Mammary epithelial cell (primary cell): ENCODE measurements at regions of chrX and their contacts with region 1.

Region 1: DNA sequence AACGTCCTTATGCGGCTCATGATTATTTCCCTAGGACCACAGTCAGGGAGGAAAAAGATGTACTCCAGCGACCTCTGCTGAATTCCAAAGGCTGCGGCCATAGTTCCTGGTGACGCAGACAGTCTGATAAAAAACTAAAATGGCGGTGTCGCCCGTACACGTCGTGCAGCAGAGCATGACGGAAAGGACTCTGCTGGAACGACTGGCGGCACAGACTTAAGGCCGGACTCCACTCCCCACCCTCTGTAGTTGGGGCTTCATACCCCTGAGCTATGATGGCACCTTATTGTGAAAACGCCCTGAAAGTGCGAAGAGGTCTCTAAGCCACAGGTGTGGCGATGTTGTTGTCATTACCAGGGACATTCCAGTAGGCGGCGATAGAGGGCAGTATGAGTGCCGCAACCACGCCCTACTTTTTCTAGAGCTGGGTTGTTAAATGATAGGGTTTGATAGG is 90.0 kb upstream of the EDA2R start:
- DNase-seq: peak; percentile 55
- H3K4me3 ChIP-seq: peak overlapping the region; percentile 27 to 66 (median 52)
- H3K27ac ChIP-seq: no peak overlapping the region
- H3K4me1 ChIP-seq: no peaks in the 10 kb centered on the region
- H3K27me3 ChIP-seq: no peaks in the 10 kb centered on the region
- CTCF ChIP-seq: peak; percentile 44 to 62

Region 2: DNA sequence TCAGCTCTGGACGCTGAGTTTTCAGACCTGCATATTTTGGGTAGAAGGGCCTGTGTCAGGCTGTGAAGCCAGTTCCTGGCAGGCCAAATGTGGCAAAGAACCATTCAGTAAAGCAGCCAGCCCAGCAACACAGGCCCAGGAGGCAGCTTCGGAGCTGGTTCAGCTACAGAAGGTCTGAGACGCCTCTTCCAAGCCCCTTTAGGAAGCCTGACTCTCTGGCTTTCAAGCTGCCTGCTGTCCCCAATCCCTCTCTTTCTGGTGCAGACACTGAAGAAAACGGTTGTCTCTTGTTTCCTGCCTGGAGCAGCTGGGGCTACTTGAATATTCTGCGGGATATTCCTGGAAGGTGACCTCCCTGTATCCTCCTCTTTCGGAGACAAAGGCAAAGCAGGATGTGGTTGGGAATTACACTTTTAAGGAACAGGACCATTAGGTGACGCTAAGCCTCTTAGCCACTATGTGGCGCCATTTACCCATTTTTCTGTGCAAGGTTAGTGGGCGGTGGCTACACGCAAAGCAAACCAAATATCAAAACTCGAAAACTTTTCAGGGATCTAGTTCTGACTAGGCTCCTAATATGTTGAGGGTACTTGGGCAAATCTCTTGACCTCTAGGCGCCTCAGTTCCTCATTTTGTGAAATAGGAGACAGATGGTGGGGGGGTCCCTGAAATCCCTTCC is 1147.0 kb before region 1 on chrX:
- CTCF ChIA-PET with region 1: interaction called, 10 read pairs
- dilution Hi-C with region 1: no loop called
- in situ Hi-C with region 1: loop called in 1 of 2 experiments (anchors 25 kb)
- intact Hi-C with region 1: loop called (anchors 1 kb)
- DNase-seq: peak; percentile 49
- H3K4me3 ChIP-seq: no peak overlapping the region
- H3K27ac ChIP-seq: no peak overlapping the region
- H3K4me1 ChIP-seq: no peaks in the 10 kb centered on the region
- H3K27me3 ChIP-seq: no peaks in the 10 kb centered on the region
- CTCF ChIP-seq: peak; percentile 72 to 75

Region 3: GRCh38 chrX:65745992-65746391 is 982.9 kb before region 1 on chrX:
- CTCF ChIA-PET with region 1: no interaction called
- dilution Hi-C with region 1: no loop called
- in situ Hi-C with region 1: no loop called
- intact Hi-C with region 1: loop called (anchors 5 kb)
- DNase-seq: no peak
- H3K4me3 ChIP-seq: no peak overlapping the region
- H3K27ac ChIP-seq: no peak overlapping the region
- H3K4me1 ChIP-seq: peaks cover 11% of the 10 kb centered on the region
- H3K27me3 ChIP-seq: no peaks in the 10 kb centered on the region
- CTCF ChIP-seq: peak; percentile 25 to 37

Region 4: GRCh38 chrX:65985922-65986588 is 742.8 kb before region 1 on chrX:
- CTCF ChIA-PET with region 1: interaction called, 4 read pairs
- dilution Hi-C with region 1: no loop called
- in situ Hi-C with region 1: no loop called
- intact Hi-C with region 1: loop called (anchors 5 kb)
- DNase-seq: peak; percentile 59
- H3K4me3 ChIP-seq: no peak overlapping the region
- H3K27ac ChIP-seq: no peak overlapping the region
- H3K4me1 ChIP-seq: no peaks in the 10 kb centered on the region
- H3K27me3 ChIP-seq: no peaks in the 10 kb centered on the region
- CTCF ChIP-seq: peak; percentile 33 to 57

Region 5: DNA sequence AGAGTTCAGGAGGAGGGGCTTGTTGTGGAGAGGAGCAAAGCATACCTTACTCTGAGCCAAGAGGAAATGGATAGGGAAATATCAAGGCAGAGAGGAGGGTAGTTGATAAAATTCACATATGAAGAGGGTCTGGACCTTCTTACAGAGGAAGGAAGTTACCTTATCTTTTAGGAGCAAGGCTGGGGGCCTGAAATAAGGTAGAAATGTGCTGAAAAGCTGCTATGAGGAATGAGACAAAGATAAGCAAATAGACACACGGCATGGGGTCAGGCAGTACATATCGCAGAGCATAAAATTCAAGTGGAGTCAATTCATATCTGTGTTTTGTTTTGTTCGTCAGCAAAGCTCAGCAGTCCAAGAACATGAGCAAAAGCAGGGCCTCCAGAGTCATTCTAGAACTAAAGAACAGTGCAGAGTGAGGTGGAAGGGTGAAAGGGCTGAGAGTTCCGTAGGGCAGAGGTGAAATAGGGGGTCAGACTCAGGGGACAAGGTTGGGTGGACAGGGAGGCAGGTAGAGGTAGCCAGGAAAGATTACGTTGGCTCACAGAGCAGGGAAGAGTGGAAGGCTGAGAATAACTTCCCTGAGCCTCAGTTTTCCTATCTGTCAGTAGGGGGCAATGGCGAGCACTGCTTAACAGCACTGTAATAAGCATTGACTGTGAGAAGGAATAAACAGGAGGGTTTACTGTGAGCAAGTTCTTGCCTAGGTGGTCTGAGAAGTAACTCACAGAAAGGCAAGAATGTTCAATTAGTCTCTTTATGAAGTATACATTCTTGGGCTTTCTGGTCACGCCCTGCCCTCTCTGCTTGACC is 698.1 kb before region 1 on chrX:
- CTCF ChIA-PET with region 1: no interaction called
- dilution Hi-C with region 1: no loop called
- in situ Hi-C with region 1: no loop called
- intact Hi-C with region 1: loop called (anchors 5 kb)
- DNase-seq: peak; percentile 3
- H3K4me3 ChIP-seq: no peak overlapping the region
- H3K27ac ChIP-seq: no peak overlapping the region
- H3K4me1 ChIP-seq: no peaks in the 10 kb centered on the region
- H3K27me3 ChIP-seq: no peaks in the 10 kb centered on the region
- CTCF ChIP-seq: peak; percentile 67 to 68

Region 6: GRCh38 chrX:66200855-66201795 is 527.7 kb before region 1 on chrX:
- CTCF ChIA-PET with region 1: interaction called, 4 read pairs
- dilution Hi-C with region 1: no loop called
- in situ Hi-C with region 1: loop called in 1 of 2 experiments (anchors 25 kb)
- intact Hi-C with region 1: loop called (anchors 1 kb)
- DNase-seq: no peak
- H3K4me3 ChIP-seq: no peak overlapping the region
- H3K27ac ChIP-seq: no peak overlapping the region
- H3K4me1 ChIP-seq: no peaks in the 10 kb centered on the region
- H3K27me3 ChIP-seq: no peaks in the 10 kb centered on the region
- CTCF ChIP-seq: peak; percentile 4 to 39

Region 7: DNA sequence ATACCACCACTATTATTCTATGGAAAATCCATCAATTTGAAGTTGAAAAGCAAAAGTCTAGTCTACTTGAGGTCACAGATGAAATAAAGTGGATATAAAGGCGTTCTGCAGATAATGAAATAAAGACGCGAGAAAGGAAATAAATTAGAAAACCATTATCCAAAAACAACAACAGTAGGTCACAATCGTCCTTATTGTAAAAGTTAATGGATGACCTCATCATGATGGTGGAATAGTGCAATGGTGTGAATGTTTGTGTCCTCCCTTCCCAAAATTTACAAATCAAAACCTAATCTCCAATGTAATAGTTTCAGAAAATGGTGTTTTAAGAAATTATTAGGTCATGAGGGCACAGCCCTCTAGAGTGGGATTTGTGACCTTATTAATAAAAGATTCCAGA is 337.1 kb before region 1 on chrX:
- CTCF ChIA-PET with region 1: no interaction called
- dilution Hi-C with region 1: no loop called
- in situ Hi-C with region 1: no loop called
- intact Hi-C with region 1: no loop called
- DNase-seq: no peak
- H3K4me3 ChIP-seq: no peak overlapping the region
- H3K27ac ChIP-seq: no peak overlapping the region
- H3K4me1 ChIP-seq: no peaks in the 10 kb centered on the region
- H3K27me3 ChIP-seq: no peaks in the 10 kb centered on the region
- CTCF ChIP-seq: no peak

Region 8: DNA sequence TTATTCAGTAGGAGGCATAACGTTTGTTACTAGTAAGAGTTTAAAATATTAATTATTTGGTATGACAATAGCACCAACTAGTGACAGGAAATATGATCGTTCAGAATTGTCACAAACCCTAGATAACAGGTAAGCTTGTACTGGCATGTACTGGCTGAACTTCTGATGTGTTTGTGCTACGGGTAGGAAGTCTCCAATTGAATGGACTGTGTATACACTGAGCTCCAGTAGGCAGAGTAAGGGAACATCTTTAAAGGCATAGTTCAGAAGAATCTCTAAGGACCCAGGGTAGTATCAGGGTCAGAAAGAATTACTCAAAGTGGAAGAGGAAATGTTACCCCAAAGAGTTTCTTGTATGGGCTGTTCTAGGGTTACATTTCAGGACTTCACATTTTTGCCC is 320.3 kb before region 1 on chrX:
- CTCF ChIA-PET with region 1: no interaction called
- dilution Hi-C with region 1: no loop called
- in situ Hi-C with region 1: no loop called
- intact Hi-C with region 1: loop called (anchors 2 kb)
- DNase-seq: peak; percentile 12
- H3K4me3 ChIP-seq: no peak overlapping the region
- H3K27ac ChIP-seq: no peak overlapping the region
- H3K4me1 ChIP-seq: no peaks in the 10 kb centered on the region
- H3K27me3 ChIP-seq: no peaks in the 10 kb centered on the region
- CTCF ChIP-seq: peak in 1 of 2 donors; percentile 29

Region 9: DNA sequence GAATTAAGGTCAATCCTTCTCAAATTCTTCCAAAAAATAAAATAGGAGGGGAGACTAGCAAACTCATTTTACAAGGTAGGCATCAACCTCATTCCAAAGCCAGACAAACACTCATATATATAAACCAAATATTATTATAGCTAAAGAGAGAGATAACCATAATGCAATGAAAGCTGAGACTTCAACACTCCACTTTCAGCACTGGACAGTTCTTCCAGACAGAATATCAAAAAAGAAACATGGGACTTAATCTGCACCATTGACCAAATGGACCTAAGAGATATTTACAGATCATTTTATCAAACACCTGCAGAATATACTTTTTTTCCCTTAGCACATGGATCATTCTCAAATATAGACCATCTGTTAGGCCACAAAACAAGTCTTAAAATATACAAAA is 74.4 kb before region 1 on chrX:
- CTCF ChIA-PET with region 1: no interaction called
- dilution Hi-C with region 1: no loop called
- in situ Hi-C with region 1: no loop called
- intact Hi-C with region 1: no loop called
- DNase-seq: no peak
- H3K4me3 ChIP-seq: no peak overlapping the region
- H3K27ac ChIP-seq: no peak overlapping the region
- H3K4me1 ChIP-seq: no peaks in the 10 kb centered on the region
- H3K27me3 ChIP-seq: no peaks in the 10 kb centered on the region
- CTCF ChIP-seq: no peak

Region 10: DNA sequence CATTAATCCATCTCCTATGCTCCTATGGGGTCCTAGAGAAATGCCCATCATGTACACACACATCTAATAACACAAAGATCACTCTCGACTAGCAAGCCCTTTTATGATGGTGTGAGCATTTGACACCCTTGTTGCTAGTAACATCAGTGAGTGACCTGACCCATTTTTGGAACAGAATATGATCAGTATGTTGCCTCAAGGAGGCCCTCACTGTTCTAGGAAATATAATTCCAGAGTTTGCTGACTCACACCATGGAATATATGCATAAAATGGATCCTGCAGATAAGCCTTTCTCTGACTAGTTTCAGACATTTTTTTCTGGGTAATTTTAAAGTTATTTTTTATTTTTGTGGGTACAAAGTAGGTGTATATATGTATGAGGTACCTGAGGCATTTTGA is 936.7 kb after region 1 on chrX:
- CTCF ChIA-PET with region 1: no interaction called
- dilution Hi-C with region 1: no loop called
- in situ Hi-C with region 1: no loop called
- intact Hi-C with region 1: no loop called
- DNase-seq: no peak
- H3K4me3 ChIP-seq: no peak overlapping the region
- H3K27ac ChIP-seq: no peak overlapping the region
- H3K4me1 ChIP-seq: no peaks in the 10 kb centered on the region
- H3K27me3 ChIP-seq: no peaks in the 10 kb centered on the region
- CTCF ChIP-seq: no peak